Cardiac septum (tissue), 1 donor: ENCODE measurements at regions of chr20 and their contacts with region 1.

Region 1: DNA sequence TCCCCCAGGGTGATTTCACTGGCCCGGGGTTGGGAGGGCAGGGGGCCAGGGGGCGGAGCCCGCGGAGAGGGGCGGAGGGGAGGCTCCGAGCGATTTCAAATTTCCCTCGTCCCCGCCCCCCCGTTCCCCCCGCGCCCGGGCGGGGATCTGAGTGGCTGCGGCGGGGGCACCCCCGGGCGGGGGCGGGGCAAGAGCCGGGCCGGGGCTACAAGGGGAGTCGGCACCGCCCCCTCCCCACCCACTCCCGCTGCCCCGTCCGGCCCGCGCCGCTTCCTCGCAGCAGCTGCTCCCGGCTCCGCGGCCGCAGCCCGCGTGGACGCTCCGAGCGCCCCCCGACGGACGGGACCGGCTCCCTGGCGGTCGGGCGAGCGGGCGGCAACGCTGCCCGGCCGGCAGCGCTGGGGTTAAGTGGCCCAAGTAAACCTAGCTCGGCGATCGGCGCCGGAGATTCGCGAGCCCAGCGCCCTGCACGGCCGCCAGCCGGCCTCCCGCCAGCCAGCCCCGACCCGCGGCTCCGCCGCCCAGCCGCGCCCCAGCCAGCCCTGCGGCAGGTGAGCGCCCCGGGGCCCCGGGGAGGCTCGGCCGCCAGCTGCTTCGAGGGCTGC is at the start of gene DNMT3B:
- DNase-seq: peak; percentile 89
- total RNA-seq, gene DNMT3B: 0.62 TPM

Region 2: DNA sequence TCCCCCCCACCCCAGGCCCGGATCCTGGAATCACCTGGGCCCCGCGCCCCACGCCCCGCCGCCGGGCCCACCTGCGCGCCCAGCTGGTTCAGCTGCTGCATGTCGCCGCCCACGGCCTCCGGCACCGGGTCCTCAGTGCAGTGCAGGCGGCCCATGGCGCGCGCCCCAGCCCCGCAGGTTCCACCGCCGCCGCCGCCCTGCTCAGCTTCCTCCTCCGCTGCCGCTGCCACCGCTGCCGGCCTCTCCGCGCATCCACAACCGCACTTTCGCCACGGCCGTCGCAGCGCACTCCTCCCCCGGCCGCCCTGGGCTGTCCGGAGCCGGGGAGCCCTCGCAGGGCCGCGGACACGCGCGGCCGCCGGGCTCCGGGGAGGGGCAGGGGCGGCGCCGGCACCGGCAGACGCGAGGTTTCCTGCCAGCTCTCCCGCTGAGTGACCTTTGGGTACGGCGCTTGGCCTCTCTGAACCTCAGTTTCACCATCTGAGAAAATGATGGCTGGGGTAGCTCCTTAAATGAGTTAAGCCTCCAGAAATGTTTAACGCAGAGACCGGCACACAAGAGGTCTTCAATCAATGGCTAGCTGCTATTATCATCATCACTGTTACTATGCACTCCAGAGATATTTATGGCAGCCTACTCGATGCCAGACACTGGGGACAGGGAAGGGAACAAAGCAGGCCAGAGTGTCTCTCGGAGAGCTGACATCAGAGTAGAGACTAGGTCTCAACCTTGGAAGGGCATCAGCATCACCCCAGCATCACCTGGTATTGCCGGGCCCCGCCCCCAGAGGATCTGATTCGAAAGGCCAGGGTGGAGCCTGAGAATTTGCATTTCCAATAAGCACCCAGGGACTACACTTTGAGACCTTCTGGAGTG is 18.8 kb before region 1 on chr20 and contains the start of gene COMMD7:
- intact Hi-C with region 1: loop called (anchors 2 kb)
- DNase-seq: peak; percentile 84
- total RNA-seq, gene COMMD7: 36.5 TPM

Region 3: GRCh38 chr20:33148040-33148439 is 385.8 kb after region 1 on chr20:
- intact Hi-C with region 1: no loop called
- DNase-seq: peak; percentile 33